Activated B cell treated with CpG ODN at 0.5 μM for 24 hours (primary cell): ENCODE measurements at regions of chr12 and their contacts with region 1.

Region 1: DNA sequence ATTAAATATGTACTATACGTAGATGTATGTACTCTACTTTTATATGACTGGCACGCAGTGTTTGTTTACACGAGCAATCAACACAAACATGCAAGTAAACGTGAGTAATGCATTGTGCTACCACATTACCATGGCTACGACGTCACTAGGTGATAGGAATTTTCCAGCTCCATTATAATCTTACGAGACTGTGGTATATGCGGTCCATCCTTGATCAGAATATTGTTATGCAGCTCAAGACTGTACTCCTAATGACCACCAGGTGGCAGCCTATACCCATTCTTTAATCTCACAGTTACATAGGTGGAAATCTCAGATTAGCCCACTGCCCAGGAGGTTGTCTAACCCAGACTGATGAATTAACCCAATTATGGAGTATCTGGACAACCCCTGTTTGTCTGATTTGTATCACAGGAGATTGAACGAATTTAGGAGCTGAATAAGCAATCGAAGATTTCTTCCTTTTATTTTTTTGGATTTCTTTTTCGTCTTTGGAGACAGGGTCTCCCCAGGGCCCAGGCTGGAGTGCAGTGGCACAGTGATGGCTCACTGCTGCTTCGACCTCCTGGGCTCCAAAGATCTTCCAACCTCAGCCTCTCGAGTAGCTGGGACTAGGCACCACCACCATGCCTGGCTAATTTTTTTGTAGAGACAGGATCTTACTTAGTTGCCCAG is 8.7 kb upstream of the TESPA1 start:
- DNase-seq: no peak
- ATAC-seq: peak; percentile 68
- H3K4me3 Mint-ChIP-seq: no peak overlapping the region
- H3K27ac Mint-ChIP-seq: no peak overlapping the region
- H3K4me1 Mint-ChIP-seq: peaks cover 43% of the 10 kb centered on the region
- H3K27me3 Mint-ChIP-seq: no peaks in the 10 kb centered on the region
- CTCF ChIP-seq: peak; percentile 75

Region 2: GRCh38 chr12:54853995-54854566 is 139.2 kb before region 1 on chr12 and contains the start of gene MUCL1:
- CTCF ChIA-PET with region 1: no interaction called
- POLR2A ChIA-PET with region 1: no interaction called
- intact Hi-C with region 1: loop called (anchors 1 kb)
- DNase-seq: no peak
- ATAC-seq: peak; percentile 92
- H3K4me3 Mint-ChIP-seq: no peak within 1 kb of the TSS
- H3K27ac Mint-ChIP-seq: no peak within 1 kb of the TSS
- H3K4me1 Mint-ChIP-seq: no peaks in the 10 kb centered on the region
- H3K27me3 Mint-ChIP-seq: peaks cover 10% of the 10 kb centered on the region
- CTCF ChIP-seq: peak; percentile 77
- total RNA-seq, gene MUCL1: not detected in 2 replicates

Region 3: DNA sequence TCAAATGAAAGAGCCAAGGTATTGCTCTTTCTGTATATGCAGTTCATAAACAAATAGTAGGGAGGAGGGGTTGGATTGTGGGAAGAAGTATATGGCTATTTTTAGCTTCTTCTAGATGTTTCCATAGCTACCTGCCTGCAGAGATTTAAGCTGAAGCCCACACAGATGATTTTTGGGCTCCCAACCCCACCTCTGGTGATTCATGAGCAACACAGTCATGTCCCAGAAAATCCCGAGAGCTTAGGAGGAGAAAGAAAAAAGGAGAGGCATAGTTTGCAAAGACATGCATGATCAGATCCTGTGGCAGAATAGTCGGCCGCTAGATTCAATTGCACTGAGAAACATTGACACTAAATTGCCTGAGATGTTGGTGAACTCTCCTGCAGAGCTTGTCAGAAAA is 22.6 kb before region 1 on chr12:
- CTCF ChIA-PET with region 1: interaction called, 12 read pairs
- POLR2A ChIA-PET with region 1: no interaction called
- intact Hi-C with region 1: no loop called
- DNase-seq: no peak
- ATAC-seq: no peak
- H3K4me3 Mint-ChIP-seq: no peak overlapping the region
- H3K27ac Mint-ChIP-seq: no peak overlapping the region
- H3K4me1 Mint-ChIP-seq: no peaks in the 10 kb centered on the region
- H3K27me3 Mint-ChIP-seq: no peaks in the 10 kb centered on the region
- CTCF ChIP-seq: no peak

Region 4: DNA sequence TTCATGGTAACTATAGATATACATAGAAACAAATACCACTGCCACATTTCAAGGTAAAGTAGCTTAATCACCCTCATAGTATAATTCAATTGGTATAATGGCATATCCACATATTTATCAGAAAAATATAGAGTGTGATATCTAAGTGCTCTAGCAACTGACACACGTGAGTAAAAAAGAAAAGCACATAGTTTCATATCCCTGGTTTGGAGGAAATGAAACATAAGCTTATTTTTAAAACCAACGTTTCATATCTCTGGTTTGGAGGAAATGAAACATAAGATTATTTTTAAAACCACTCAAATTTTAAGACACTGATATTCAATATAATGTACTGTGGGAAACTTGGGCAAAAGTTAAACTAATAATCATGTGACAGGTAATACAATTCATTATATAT is 474.5 kb after region 1 on chr12:
- CTCF ChIA-PET with region 1: no interaction called
- POLR2A ChIA-PET with region 1: no interaction called
- intact Hi-C with region 1: loop called (anchors 5 kb)
- DNase-seq: no peak
- ATAC-seq: peak; percentile 70
- H3K4me3 Mint-ChIP-seq: peak overlapping the region; percentile 61
- H3K27ac Mint-ChIP-seq: peak overlapping the region; percentile 46
- H3K4me1 Mint-ChIP-seq: peaks cover 45% of the 10 kb centered on the region
- H3K27me3 Mint-ChIP-seq: no peaks in the 10 kb centered on the region
- CTCF ChIP-seq: no peak